Mammary epithelial cell (primary cell): ENCODE measurements at regions of chr15 and their contacts with region 1.

Region 1: GRCh38 chr15:73944161-73945129 is 18.2 kb downstream of the LOXL1 start:
- DNase-seq: no peak
- H3K4me3 ChIP-seq: no peak overlapping the region
- H3K27ac ChIP-seq: no peak overlapping the region
- H3K4me1 ChIP-seq: peaks cover 25% of the 10 kb centered on the region
- H3K27me3 ChIP-seq: no peaks in the 10 kb centered on the region
- CTCF ChIP-seq: no peak

Region 2: GRCh38 chr15:73866881-73867410 is 77.5 kb before region 1 on chr15:
- CTCF ChIA-PET with region 1: no interaction called
- dilution Hi-C with region 1: loop called (anchors 5 kb)
- in situ Hi-C with region 1: no loop called
- intact Hi-C with region 1: no loop called
- DNase-seq: no peak
- H3K4me3 ChIP-seq: no peak overlapping the region
- H3K27ac ChIP-seq: no peak overlapping the region
- H3K4me1 ChIP-seq: no peaks in the 10 kb centered on the region
- H3K27me3 ChIP-seq: peaks cover 9% of the 10 kb centered on the region
- CTCF ChIP-seq: no peak

Region 3: DNA sequence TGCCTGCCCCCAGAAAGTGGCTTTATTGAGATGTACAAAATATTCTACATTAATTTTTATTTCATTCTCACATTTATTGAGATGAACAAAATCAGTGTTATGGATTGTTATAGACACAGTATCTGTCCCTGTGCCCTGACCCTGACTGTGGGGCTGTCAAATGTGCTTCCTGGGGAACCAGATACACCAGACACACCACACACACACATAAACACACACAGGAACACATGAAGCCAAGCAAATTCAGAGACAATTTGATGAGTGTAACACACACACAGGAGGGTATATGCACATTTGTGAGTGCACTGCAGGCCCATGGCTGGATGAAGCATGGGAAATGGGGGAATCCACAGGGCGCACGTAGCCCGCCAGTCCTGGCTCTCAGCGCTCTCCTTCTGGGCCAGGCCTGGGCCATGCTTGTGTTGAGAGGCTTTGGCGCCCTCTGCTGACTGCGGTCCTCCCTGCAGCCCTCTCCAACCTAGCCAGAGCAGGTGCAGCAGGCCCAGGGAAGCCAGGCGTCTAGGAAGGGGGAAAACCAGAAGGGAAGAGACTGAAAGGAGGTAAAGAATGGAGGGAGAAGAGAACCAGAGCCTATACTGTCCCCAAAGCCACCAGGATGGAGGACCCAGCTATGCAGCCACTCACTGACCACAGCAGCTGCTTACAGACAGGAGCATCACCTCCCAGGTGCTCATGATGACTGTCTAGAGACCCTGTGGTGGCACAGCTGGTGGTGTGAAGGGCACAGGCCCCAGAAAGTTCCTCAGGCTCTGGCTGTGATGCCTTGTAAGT is 36.2 kb before region 1 on chr15:
- CTCF ChIA-PET with region 1: no interaction called
- dilution Hi-C with region 1: no loop called
- in situ Hi-C with region 1: no loop called
- intact Hi-C with region 1: no loop called
- DNase-seq: peak; percentile 45
- H3K4me3 ChIP-seq: no peak overlapping the region
- H3K27ac ChIP-seq: no peak overlapping the region
- H3K4me1 ChIP-seq: no peaks in the 10 kb centered on the region
- H3K27me3 ChIP-seq: no peaks in the 10 kb centered on the region
- CTCF ChIP-seq: peak; percentile 90 to 97

Region 4: GRCh38 chr15:73991726-73992593 is 47.5 kb after region 1 on chr15 and contains the start of gene STOML1:
- CTCF ChIA-PET with region 1: no interaction called
- dilution Hi-C with region 1: no loop called
- in situ Hi-C with region 1: no loop called
- intact Hi-C with region 1: no loop called
- DNase-seq: peak; percentile 92
- H3K4me3 ChIP-seq: peak within 1 kb of the TSS; percentile 59 to 78 (median 68)
- H3K27ac ChIP-seq: peak within 1 kb of the TSS; percentile 35
- H3K4me1 ChIP-seq: peaks cover 61% of the 10 kb centered on the region
- H3K27me3 ChIP-seq: no peaks in the 10 kb centered on the region
- CTCF ChIP-seq: peak; percentile 64 to 80
- total RNA-seq, gene STOML1: 14.0 to 15.3 TPM

Region 5: GRCh38 chr15:74011610-74012009 is 67.2 kb after region 1 on chr15:
- CTCF ChIA-PET with region 1: no interaction called
- dilution Hi-C with region 1: loop called (anchors 5 kb)
- in situ Hi-C with region 1: no loop called
- intact Hi-C with region 1: no loop called
- DNase-seq: no peak
- H3K4me3 ChIP-seq: no peak overlapping the region
- H3K27ac ChIP-seq: no peak overlapping the region
- H3K4me1 ChIP-seq: peaks cover 12% of the 10 kb centered on the region
- H3K27me3 ChIP-seq: no peaks in the 10 kb centered on the region
- CTCF ChIP-seq: no peak